GM12878 (cell line): ENCODE measurements at regions of chr2 and their contacts with region 1.

Region 1: DNA sequence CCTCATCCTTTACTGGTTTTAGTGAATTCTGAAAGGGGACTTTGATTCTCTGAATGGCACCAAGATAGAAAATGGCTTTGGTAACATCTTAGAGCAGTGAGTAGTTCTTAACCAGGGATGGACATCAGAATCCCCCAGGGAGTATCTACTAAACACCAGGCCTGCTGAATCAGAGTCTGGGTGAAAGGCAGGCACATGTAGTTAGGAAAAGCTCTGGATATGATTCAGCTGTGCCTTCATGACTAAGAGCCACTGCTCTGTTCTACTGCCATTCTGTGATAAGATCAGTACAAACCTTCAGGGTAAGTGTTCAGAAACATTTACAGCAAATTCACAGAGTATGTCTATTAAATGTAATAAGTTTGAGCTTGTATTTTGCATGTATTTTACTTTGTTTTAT is 46.2 kb upstream of the B3GNT2 start:
- DNase-seq: no peak
- ATAC-seq: peak; percentile 23
- H3K4me3 ChIP-seq: no peak overlapping the region; the same call in 1 of the 2 replicates
- H3K27ac ChIP-seq: peak overlapping the region; percentile 91
- H3K4me1 ChIP-seq: peaks cover 43% of the 10 kb centered on the region
- H3K27me3 ChIP-seq: no peaks in the 10 kb centered on the region
- CTCF ChIP-seq: no peak
- EP300 ChIP-seq: no peak
- POLR2A ChIP-seq: no peak
- RAD21 ChIP-seq: no peak

Region 2: GRCh38 chr2:62038975-62039771 is 110.5 kb before region 1 on chr2:
- CTCF ChIA-PET with region 1: interaction called, 3 read pairs
- POLR2A ChIA-PET with region 1: interaction called, 10 read pairs
- RAD21 ChIA-PET with region 1: interaction called, 13 read pairs
- SMC1A ChIA-PET with region 1: interaction called, 38 read pairs
- in situ Hi-C with region 1: no loop called
- intact Hi-C with region 1: loop called (anchors 5 kb)
- DNase-seq: peak; percentile 98
- ATAC-seq: peak; percentile 99
- H3K4me3 ChIP-seq: peak overlapping the region; percentile 16; the same call in 1 of the 2 replicates
- H3K27ac ChIP-seq: peak overlapping the region; percentile 71
- H3K4me1 ChIP-seq: peaks cover 25% of the 10 kb centered on the region
- H3K27me3 ChIP-seq: no peaks in the 10 kb centered on the region
- CTCF ChIP-seq: no peak
- EP300 ChIP-seq: peak; percentile 91 to 100
- POLR2A ChIP-seq: no peak
- RAD21 ChIP-seq: peak; percentile 33; the same call in 1 of the 2 replicates

Region 3: GRCh38 chr2:62133320-62133823 is 16.3 kb before region 1 on chr2:
- CTCF ChIA-PET with region 1: interaction called, 5 read pairs
- POLR2A ChIA-PET with region 1: interaction called, 8 read pairs
- RAD21 ChIA-PET with region 1: interaction called, 48 read pairs
- SMC1A ChIA-PET with region 1: interaction called, 72 read pairs
- in situ Hi-C with region 1: no loop called
- intact Hi-C with region 1: no loop called
- DNase-seq: no peak
- ATAC-seq: no peak
- H3K4me3 ChIP-seq: no peak overlapping the region
- H3K27ac ChIP-seq: peak overlapping the region; percentile 41
- H3K4me1 ChIP-seq: peaks cover 44% of the 10 kb centered on the region
- H3K27me3 ChIP-seq: no peaks in the 10 kb centered on the region
- CTCF ChIP-seq: no peak
- EP300 ChIP-seq: no peak
- POLR2A ChIP-seq: no peak
- RAD21 ChIP-seq: no peak

Region 4: DNA sequence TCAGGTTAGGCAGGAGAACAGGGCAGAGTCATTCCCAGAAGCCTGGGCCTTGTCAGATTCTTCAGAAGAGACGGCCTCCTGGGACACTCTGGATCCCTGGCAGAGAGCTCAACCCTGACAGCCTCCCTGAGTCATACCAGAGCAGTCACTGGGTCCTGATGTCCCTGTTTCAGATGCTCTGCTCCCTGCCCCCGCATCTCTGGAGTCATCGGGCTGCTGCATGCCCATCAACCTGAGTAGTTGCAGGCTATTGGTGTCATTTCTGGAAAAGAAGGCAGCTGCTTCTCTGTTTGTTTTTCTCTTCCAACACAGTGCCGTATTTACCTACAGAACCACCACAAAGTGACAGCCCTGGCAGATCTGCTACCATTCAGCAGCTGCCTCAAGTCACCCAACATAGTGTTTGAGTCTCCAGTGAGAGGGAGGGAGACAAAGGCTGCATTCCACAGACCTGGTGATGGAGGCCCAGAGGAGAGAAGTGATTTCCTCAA is 191.3 kb after region 1 on chr2:
- CTCF ChIA-PET with region 1: no interaction called
- POLR2A ChIA-PET with region 1: no interaction called
- RAD21 ChIA-PET with region 1: interaction called, 4 read pairs
- SMC1A ChIA-PET with region 1: no interaction called
- in situ Hi-C with region 1: no loop called
- intact Hi-C with region 1: loop called (anchors 10 kb)
- DNase-seq: peak; percentile 85
- ATAC-seq: peak; percentile 84
- H3K4me3 ChIP-seq: no peak overlapping the region
- H3K27ac ChIP-seq: peak overlapping the region; percentile 77
- H3K4me1 ChIP-seq: peaks cover 50% of the 10 kb centered on the region
- H3K27me3 ChIP-seq: no peaks in the 10 kb centered on the region
- CTCF ChIP-seq: no peak
- EP300 ChIP-seq: peak; percentile 15 to 43; a peak in 2 of 4 replicates
- POLR2A ChIP-seq: no peak; the same call in 1 of the 2 replicates
- RAD21 ChIP-seq: 0 out of 2 replicates have a peak, but pooled peaks have one; percentile 14

Region 5: DNA sequence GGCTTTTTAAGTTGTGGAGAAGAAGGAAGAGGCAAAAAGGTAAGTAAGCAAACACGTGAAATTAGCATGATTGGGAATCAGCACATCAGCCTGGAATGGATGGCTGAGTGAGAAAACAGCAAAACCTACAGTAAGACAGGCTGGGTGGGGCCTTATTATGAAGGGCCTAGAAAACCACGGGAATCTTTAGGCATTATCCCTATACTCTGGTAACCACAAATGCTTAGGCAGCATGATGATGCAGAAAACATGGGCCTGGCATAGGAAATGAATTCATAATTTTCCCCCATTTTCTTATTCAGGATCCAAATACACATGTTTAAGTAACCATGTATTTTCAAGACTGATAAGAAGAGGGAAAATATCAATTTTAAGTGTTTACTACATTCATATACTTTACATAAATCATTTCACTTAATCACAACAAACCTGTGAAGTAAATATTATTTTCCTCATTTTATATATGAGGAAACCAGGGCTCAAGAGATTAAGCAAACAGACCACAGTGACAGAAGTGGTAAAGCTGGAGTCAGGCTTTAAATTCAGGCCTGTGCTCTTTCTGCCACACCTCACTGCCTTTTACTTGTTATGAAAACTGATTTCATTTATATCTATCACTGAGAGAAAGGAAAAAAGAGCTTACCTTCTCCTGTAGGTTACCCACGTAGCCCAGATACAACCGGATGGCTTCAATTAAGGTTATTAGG is 352.2 kb after region 1 on chr2:
- CTCF ChIA-PET with region 1: no interaction called
- POLR2A ChIA-PET with region 1: no interaction called
- RAD21 ChIA-PET with region 1: no interaction called
- SMC1A ChIA-PET with region 1: no interaction called
- in situ Hi-C with region 1: no loop called
- intact Hi-C with region 1: no loop called
- DNase-seq: no peak
- ATAC-seq: no peak
- H3K4me3 ChIP-seq: no peak overlapping the region
- H3K27ac ChIP-seq: no peak overlapping the region
- H3K4me1 ChIP-seq: no peaks in the 10 kb centered on the region; the same call in 1 of the 2 replicates
- H3K27me3 ChIP-seq: no peaks in the 10 kb centered on the region
- CTCF ChIP-seq: no peak
- EP300 ChIP-seq: no peak
- POLR2A ChIP-seq: no peak
- RAD21 ChIP-seq: no peak

Region 6: DNA sequence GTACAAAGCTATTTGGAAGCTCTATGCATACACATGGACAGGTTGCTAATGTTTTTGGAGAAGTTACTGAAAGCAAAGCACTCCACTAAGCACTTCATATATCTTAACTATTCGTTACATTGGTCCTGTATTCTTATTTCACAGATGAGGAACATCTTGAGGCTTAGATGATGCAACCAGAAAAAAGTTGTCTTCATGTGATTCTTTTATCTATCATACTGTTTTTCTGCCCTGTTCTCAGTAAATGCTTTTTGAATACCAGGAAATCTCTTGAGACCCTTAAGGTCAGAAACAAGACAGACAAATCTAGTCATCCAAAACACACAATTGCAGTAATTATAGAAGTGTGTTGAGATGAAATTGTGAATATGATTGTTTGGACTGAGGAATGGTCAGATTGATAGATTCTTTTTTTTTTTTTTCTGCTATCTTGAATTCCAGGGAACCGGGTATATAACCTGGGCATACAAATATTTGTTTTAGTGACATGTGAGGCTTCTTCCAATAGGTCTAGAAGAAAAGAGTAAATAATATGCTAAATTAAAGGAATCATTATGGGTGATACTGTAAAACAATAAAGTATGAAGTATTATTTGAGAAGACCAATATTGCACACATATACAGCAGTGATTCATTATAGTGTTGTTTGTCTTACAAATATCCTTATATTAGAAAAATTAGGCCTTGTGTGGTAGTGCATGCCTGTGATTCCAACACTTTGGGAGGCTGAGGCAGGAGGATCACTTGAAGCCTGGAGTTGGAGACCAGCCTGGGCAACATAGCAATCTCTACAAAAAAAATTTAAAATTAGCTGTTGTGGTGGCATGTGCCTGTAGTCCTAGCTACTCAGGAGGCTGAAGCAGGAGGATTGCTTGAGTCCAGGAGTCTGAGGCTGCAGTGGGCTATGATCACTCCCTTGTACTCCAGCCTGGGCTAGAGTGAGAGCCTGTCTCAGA is 589.6 kb after region 1 on chr2:
- CTCF ChIA-PET with region 1: no interaction called
- POLR2A ChIA-PET with region 1: no interaction called
- RAD21 ChIA-PET with region 1: no interaction called
- SMC1A ChIA-PET with region 1: no interaction called
- in situ Hi-C with region 1: no loop called
- intact Hi-C with region 1: loop called (anchors 10 kb)
- DNase-seq: no peak
- ATAC-seq: no peak
- H3K4me3 ChIP-seq: no peak overlapping the region
- H3K27ac ChIP-seq: no peak overlapping the region
- H3K4me1 ChIP-seq: no peaks in the 10 kb centered on the region
- H3K27me3 ChIP-seq: no peaks in the 10 kb centered on the region
- CTCF ChIP-seq: no peak
- EP300 ChIP-seq: no peak
- POLR2A ChIP-seq: no peak
- RAD21 ChIP-seq: no peak